CD4-positive, alpha-beta memory T cell (primary cell): ENCODE measurements at regions of chr19 and their contacts with region 1.

Region 1: GRCh38 chr19:1241417-1242095 is at the start of gene ATP5F1D:
- DNase-seq: peak; percentile 84 to 88 (median 86)
- H3K4me3 ChIP-seq: peak within 1 kb of the TSS; percentile 29 to 59
- H3K4me3 Mint-ChIP-seq: peak within 1 kb of the TSS; percentile 89 to 95 (median 92)
- H3K27ac ChIP-seq: peak within 1 kb of the TSS; percentile 72
- H3K27ac Mint-ChIP-seq: peak within 1 kb of the TSS; percentile 94 to 99 (median 98)
- H3K4me1 ChIP-seq: peaks cover 59% of the 10 kb centered on the region
- H3K4me1 Mint-ChIP-seq: peaks cover 12 to 52% (median 33%) of the 10 kb centered on the region in 4 donors
- H3K27me3 ChIP-seq: no peaks in the 10 kb centered on the region
- H3K27me3 Mint-ChIP-seq: peaks cover 6 to 10% of the 10 kb centered on the region in 2 donors
- total RNA-seq, gene ATP5F1D: 105 to 108 TPM

Region 2: DNA sequence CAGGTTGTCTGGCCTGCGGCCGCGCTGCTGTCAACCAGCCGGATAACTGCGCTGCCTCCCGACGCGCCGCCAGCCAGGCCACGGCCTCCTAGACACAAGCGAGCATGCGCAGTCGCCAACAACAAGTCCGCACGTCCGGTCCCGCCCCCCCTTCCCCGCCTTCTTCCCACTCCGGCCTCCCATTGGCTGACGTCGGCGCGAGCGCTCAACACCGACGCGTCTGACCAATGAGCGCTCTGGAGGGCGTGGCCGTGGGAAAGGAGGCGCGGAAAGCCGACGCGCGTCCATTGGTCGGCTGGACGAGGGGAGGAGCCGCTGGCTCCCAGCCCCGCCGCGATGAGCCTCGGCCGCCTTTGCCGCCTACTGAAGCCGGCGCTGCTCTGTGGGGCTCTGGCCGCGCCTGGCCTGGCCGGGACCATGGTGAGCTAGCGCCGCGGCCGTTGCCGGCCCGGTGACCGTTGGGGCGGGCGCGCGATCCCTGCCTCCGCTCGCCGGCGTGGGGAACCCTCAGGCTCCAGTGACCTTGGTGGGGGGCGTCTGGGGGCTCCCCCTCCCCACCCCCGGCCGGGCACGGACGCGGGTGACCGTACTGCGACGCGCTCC is 137.7 kb before region 1 on chr19 and contains the start of gene GPX4:
- CTCF ChIA-PET with region 1: no interaction called
- POLR2A ChIA-PET with region 1: interaction called, 5 read pairs
- intact Hi-C with region 1: loop called (anchors 2 kb)
- DNase-seq: peak; percentile 94 to 98 (median 97)
- H3K4me3 ChIP-seq: peak within 1 kb of the TSS; percentile 47 to 76
- H3K4me3 Mint-ChIP-seq: peak within 1 kb of the TSS; percentile 73 to 86 (median 77)
- H3K27ac ChIP-seq: peak within 1 kb of the TSS; percentile 96
- H3K27ac Mint-ChIP-seq: peak within 1 kb of the TSS; percentile 92 to 97 (median 96)
- H3K4me1 ChIP-seq: peaks cover 43% of the 10 kb centered on the region
- H3K4me1 Mint-ChIP-seq: peaks cover 14 to 51% (median 33%) of the 10 kb centered on the region in 4 donors
- H3K27me3 ChIP-seq: no peaks in the 10 kb centered on the region
- H3K27me3 Mint-ChIP-seq: no peaks in the 10 kb centered on the region
- total RNA-seq, gene GPX4: 210 to 220 TPM

Region 3: GRCh38 chr19:1373534-1374249 is 132.1 kb after region 1 on chr19:
- CTCF ChIA-PET with region 1: interaction called, 15 read pairs
- POLR2A ChIA-PET with region 1: interaction called, 3 read pairs
- intact Hi-C with region 1: no loop called
- DNase-seq: no peak
- H3K4me3 ChIP-seq: no peak overlapping the region
- H3K4me3 Mint-ChIP-seq: no peak overlapping the region
- H3K27ac ChIP-seq: no peak overlapping the region
- H3K27ac Mint-ChIP-seq: no peak overlapping the region
- H3K4me1 ChIP-seq: no peaks in the 10 kb centered on the region
- H3K4me1 Mint-ChIP-seq: no peaks in the 10 kb centered on the region
- H3K27me3 ChIP-seq: no peaks in the 10 kb centered on the region
- H3K27me3 Mint-ChIP-seq: no peaks in the 10 kb centered on the region